Motor neuron (in vitro differentiated cells): ENCODE measurements at regions of chr1 and their contacts with region 1.

Region 1: DNA sequence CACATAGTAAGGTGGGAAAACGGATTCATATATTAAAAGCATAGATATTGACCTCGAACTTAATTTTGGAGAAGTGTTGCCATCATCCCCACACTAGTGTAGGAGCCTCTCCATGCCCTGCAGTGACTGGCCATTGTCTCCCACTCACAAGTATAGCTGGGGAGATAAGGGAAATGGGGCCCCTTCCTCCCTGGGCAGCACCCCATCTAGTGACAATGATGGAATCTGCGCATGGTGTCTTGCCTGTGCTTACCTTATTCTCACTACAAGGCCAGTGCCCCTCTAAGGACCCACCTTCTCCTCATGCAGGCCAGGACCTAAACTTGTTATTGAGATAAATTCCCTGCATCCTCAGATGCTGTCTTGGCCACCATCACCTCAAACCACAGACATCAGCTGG is 374.9 kb downstream of the NTNG1 start:
- ATAC-seq: no peak
- H3K4me3 ChIP-seq: no peak overlapping the region
- H3K27ac ChIP-seq: no peak overlapping the region
- H3K4me1 ChIP-seq: no peaks in the 10 kb centered on the region

Region 2: DNA sequence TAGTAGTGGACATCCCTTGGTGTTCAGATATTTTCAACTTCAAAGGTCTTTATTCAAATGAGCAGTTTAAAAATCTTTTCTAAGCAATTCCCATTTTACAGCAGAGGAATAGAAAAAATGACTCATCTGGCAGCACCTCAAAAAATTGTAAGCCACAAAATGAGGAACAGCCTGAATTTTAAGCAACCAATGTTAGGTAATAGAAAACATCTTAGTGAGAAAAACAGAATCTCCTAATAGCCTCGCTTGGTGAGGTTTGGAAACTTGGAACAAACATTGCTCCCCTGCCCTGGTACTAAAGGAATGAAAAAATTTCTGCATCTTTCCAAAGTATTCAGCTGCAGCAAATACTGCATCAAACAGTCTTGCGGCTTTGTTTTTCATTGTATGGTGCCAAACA is 110.5 kb before region 1 on chr1:
- in situ Hi-C with region 1: loop called in 1 of 9 experiments (anchors 25 kb)
- ATAC-seq: peak in 1 of 8 experiments; percentile 27
- H3K4me3 ChIP-seq: no peak overlapping the region
- H3K27ac ChIP-seq: no peak overlapping the region
- H3K4me1 ChIP-seq: peaks cover 0 to 9% of the 10 kb centered on the region in 2 donors

Region 3: GRCh38 chr1:107840725-107841124 is 325.0 kb after region 1 on chr1:
- in situ Hi-C with region 1: no loop called
- ATAC-seq: no peak
- H3K4me3 ChIP-seq: no peak overlapping the region
- H3K27ac ChIP-seq: no peak overlapping the region
- H3K4me1 ChIP-seq: no peaks in the 10 kb centered on the region